ENCODE measurements at regions of chr17 and their contacts with region 1.

Region 1: GRCh38 chr17:43846221-43846712 is 709 bp upstream of the CD300LG start:
- DNase-seq: peak; percentile 87 to 97
- ATAC-seq: peak; percentile 77 to 89
- H3K4me3 ChIP-seq: no peak overlapping the region
- H3K27ac ChIP-seq: peak overlapping the region in 1 of 2 experiments; percentile 62; a peak in 4 of 6 replicates
- H3K4me1 ChIP-seq: peaks cover 19% of the 10 kb centered on the region
- CTCF ChIP-seq: peak; percentile 92
- EP300 ChIP-seq: no peak
- POLR2A ChIP-seq: no peak
- RAD21 ChIP-seq: peak; percentile 80 to 82

Region 2: DNA sequence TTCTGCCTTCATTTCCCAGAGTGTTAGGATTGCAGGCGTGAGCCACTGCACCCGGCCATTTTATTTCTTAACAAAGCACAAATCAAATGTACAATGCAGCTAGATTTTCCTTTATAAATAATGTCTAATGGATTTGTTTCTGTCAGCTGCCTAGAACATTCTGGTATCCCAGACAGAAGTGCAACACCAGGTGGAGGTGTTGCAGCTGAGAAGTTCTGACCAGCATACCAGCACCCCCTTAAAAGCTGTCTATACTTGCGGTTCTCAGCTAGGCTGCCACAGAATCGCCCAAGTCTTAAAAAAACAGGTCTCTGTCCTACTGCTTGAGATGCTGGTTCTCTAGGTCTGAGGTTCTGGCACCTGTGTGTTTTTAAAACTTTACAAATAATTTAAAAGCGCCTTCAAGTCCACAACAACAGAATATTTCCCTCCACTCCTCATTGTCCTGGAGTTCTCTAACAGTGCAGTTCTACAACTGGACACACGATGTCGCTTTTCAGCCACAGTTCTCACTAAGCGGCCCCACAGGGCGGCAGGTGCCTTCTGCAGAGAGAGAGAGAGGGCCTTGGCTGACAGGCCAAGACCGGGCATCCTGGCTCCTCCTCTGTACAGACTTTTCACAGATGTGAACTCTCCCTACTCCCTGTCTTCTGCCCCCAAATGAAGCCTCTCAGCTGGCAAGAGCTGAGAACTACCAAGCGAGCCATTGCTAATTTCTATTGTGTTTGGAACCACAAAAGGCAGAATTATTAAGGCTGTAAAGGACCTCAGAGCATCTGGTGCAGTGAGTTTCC is 152.0 kb before region 1 on chr17:
- CTCF ChIA-PET with region 1: interaction called, 31 read pairs
- POLR2A ChIA-PET with region 1: no interaction called
- DNase-seq: peak; percentile 80 to 90
- ATAC-seq: peak; percentile 83 to 94
- H3K4me3 ChIP-seq: no peak overlapping the region
- H3K27ac ChIP-seq: 0 out of 6 replicates have a peak overlapping the region, but pooled peaks of 1 of the 2 experiments have one; percentile 33
- H3K4me1 ChIP-seq: peaks cover 14% of the 10 kb centered on the region
- CTCF ChIP-seq: peak; percentile 100
- EP300 ChIP-seq: no peak
- POLR2A ChIP-seq: no peak
- RAD21 ChIP-seq: peak; percentile 100

Region 3: GRCh38 chr17:43772877-43773648 is 73.2 kb before region 1 on chr17:
- CTCF ChIA-PET with region 1: interaction called, 54 read pairs
- POLR2A ChIA-PET with region 1: interaction called, 16 read pairs
- DNase-seq: no peak
- ATAC-seq: no peak
- H3K4me3 ChIP-seq: no peak overlapping the region
- H3K27ac ChIP-seq: no peak overlapping the region
- H3K4me1 ChIP-seq: peaks cover 28% of the 10 kb centered on the region
- CTCF ChIP-seq: no peak
- EP300 ChIP-seq: no peak
- POLR2A ChIP-seq: no peak
- RAD21 ChIP-seq: no peak

Region 4: DNA sequence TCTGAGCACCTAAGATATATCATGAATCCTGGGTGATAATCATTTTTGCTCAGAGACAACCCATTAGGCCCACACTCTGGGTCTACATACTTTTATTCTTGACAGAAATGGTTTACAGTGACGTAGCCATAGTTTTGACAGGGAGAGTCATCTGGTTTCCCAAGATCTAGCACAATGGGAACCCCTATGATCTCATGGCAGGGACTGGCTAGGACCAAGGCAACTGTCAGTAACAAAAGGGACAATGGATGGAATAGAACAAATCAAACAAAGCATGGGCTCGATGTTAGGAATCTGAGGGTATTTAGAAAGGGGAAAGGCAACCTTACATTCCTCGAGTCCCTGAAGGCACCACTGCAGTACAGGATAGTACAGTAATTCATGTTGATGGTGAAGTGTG is 45.5 kb before region 1 on chr17:
- CTCF ChIA-PET with region 1: interaction called, 19 read pairs
- POLR2A ChIA-PET with region 1: interaction called, 6 read pairs
- DNase-seq: no peak
- ATAC-seq: no peak
- H3K4me3 ChIP-seq: no peak overlapping the region
- H3K27ac ChIP-seq: no peak overlapping the region
- H3K4me1 ChIP-seq: no peaks in the 10 kb centered on the region
- CTCF ChIP-seq: no peak
- EP300 ChIP-seq: no peak
- POLR2A ChIP-seq: no peak
- RAD21 ChIP-seq: no peak

Region 5: DNA sequence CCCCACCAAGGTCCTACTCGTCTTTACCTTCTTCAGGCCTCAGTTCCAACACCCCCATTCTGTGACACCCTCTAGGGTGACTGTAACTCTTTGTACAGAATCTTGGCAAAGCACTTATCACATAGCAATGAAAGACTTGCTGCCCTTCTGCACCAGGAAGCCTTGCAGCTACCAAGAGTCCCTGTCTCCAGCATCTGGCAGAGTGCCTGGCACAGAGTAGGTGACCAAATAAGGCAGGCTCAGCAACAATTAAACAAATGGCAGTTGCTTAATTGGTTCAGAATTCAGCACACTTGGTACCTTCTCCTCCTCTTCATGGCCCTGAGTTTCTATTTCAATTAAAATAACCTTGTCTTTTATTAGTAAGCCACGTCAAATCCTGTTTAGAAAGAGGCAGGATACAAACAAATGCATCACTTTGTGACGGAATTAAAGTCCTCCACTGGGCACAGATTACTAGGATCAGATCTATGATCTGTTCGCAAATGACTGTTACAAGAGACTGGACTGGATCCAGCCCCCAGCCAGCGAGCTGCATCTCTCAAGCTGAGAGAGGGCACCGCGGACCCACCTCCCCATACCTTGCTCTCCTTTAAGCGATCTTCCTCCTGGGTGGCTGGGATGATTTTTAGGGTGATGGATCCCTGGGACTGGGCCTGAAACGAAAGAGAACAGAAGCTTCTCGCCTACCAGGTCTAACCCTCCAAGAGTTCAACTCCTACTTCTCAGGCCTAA is 22.8 kb before region 1 on chr17:
- CTCF ChIA-PET with region 1: interaction called, 37 read pairs
- POLR2A ChIA-PET with region 1: no interaction called
- DNase-seq: no peak
- ATAC-seq: no peak
- H3K4me3 ChIP-seq: no peak overlapping the region
- H3K27ac ChIP-seq: no peak overlapping the region
- H3K4me1 ChIP-seq: no peaks in the 10 kb centered on the region
- CTCF ChIP-seq: no peak
- EP300 ChIP-seq: no peak
- POLR2A ChIP-seq: no peak
- RAD21 ChIP-seq: no peak

Region 6: DNA sequence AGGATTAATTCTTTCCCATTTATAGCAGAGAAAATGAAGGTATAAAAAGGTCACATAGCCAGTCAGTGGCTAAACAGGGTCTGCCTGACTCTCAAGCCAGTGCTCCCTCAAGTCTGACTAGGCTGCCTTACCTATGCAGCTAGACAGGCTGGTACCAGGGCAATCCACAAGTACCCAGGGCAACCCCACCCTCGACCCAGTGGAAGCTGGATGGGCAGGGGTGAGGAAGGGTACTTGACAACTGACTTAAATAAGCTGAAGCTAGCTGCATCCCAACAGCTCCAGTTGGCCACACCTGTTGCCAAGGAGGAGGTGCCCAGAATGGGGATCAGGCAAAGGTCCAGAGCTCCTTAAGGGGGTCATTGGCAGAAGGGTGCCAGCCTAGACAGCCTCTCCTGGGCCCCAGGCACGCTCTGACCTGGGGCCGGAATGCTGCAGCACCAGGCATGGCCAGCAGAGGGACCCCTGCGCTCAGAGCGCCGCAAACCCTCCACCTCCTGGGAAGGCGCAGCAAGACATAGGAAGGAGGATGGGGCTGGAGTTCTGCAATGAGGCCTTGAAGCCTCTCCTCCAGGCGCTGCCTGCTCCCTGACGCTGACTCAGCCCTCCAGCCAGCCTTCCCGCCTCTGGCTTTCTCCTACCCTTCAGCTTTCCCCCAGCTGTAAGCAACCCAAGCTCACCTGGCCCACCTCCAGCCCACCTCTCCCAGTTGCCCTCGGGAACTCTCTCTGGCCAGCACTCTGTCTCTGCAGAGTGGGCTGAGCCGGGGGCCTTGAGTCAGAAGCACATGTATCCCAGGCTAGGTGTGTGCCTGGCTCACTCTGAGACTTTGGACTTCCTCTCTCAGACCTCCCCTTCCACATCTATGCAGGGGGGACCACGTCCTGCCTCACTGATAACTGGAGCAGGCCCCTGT is 32.3 kb after region 1 on chr17:
- CTCF ChIA-PET with region 1: interaction called, 57 read pairs
- POLR2A ChIA-PET with region 1: no interaction called
- DNase-seq: peak; percentile 87 to 98
- ATAC-seq: peak; percentile 83 to 94
- H3K4me3 ChIP-seq: no peak overlapping the region
- H3K27ac ChIP-seq: peak overlapping the region; percentile 33 to 54; a peak in 4 of 6 replicates
- H3K4me1 ChIP-seq: peaks cover 5% of the 10 kb centered on the region
- CTCF ChIP-seq: peak; percentile 96
- EP300 ChIP-seq: no peak
- POLR2A ChIP-seq: no peak
- RAD21 ChIP-seq: peak; percentile 85 to 88